MCF 10A (cell line): ENCODE measurements at regions of chr2 and their contacts with region 1.

Region 1: DNA sequence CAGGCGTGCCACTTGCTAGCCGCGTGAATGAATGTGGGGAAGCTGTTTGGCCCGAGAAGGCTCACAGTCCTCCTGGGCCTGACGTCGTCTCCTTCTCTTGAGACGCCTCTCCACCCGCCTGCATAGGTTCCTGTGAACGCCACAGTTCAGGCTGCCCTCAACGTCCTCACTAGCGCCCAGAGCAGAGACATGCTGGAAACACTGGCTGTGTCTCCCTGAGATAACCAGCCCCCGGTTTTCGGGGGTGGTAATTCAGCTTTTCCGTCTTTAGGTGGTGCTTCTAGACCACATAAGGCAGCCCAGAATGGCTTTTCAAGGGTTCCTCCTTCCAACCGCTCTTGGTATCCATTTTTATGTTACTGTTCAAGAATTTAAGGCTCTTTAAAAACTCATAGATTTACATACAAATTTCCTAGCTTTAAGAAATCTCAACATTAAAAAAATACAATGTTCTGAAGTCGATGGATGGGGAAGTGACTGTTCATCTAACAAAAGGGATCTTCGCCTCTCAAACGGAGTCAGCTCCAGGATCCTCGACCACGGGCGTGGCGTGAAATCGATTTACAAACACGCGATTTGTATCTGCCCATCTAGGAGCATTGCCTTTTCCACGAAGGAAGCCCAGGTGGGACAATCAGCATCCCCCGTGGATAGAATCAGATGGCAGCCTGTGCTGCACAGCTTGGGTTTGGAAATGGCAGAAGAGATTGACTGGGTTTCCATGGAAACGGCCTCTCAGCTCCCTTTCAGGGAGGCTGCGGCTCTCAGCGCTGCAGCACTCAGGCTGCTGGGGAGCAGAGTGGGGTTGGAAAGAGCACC is 110.6 kb upstream of the PXDN start:
- DNase-seq: peak; percentile 31
- H3K4me3 Mint-ChIP-seq: no peak overlapping the region
- H3K27ac Mint-ChIP-seq: no peak overlapping the region
- H3K4me1 Mint-ChIP-seq: no peaks in the 10 kb centered on the region
- H3K27me3 Mint-ChIP-seq: peaks cover 48% of the 10 kb centered on the region
- CTCF ChIP-seq: peak; percentile 35

Region 2: DNA sequence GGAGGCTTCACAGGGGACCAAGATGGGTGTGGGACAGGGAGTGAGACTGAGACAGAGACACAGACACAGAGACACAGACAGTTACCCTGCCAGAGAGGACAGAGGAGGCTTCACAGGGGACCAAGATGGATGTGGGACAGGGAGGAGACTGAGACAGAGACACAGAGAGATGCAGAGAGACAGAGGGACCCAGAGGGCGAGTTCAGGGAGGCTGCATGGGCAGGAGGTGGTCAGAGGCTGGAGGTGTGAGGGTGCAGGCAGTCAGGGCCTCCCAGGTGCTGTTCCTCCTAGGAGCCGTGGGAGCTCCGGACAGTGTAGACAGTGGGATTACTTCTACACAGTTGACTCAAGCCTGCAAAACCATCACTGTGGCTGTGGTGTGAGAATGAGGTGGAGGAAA is 95.5 kb after region 1 on chr2:
- CTCF ChIA-PET with region 1: no interaction called
- POLR2A ChIA-PET with region 1: no interaction called
- intact Hi-C with region 1: no loop called
- DNase-seq: no peak
- H3K4me3 Mint-ChIP-seq: no peak overlapping the region
- H3K27ac Mint-ChIP-seq: no peak overlapping the region
- H3K4me1 Mint-ChIP-seq: no peaks in the 10 kb centered on the region
- H3K27me3 Mint-ChIP-seq: peaks cover 34% of the 10 kb centered on the region
- CTCF ChIP-seq: no peak

Region 3: DNA sequence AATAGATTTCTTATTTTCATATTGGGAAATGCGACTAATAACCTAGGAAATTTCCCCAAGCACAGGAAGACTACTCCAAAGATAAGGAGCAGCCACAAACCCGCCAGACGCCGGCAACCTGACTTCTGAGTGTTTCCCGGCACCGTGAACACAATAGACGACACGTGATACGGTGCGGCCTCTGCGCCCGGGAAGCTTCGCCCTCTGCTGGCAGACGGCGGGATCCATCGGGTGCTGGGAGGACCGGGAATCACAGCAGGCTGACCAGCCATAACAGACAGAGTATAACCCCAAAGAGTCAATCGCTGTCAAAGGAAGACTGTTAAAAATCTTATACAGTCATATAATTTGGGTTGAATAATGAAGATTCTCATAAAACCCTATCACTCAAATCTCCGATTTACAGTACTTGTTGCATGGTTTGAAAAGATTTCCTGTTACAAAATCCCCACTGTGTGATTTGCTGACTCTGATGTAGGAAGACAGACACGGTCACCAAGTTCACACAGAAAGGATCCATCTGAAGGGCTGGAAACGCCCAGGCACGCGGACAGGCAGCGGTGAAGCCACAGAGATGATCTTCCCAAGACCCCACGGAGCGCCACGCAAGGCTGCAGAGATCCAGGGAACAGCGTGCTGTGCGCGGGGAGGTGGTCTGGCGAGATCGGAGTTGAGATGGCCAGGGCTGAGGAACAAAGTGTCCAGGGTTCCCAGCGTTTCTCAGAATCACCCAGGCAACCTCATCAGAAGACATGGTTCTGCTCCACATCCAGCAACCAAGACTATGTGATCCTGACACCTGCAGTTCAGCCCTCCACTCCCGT is 1448.9 kb after region 1 on chr2:
- CTCF ChIA-PET with region 1: no interaction called
- POLR2A ChIA-PET with region 1: no interaction called
- intact Hi-C with region 1: loop called (anchors 10 kb)
- DNase-seq: peak; percentile 77
- H3K4me3 Mint-ChIP-seq: no peak overlapping the region
- H3K27ac Mint-ChIP-seq: no peak overlapping the region
- H3K4me1 Mint-ChIP-seq: no peaks in the 10 kb centered on the region
- H3K27me3 Mint-ChIP-seq: no peaks in the 10 kb centered on the region
- CTCF ChIP-seq: peak; percentile 88

Region 4: GRCh38 chr2:3651691-3652648 is 1797.0 kb after region 1 on chr2:
- CTCF ChIA-PET with region 1: no interaction called
- POLR2A ChIA-PET with region 1: no interaction called
- intact Hi-C with region 1: loop called (anchors 5 kb)
- DNase-seq: no peak
- H3K4me3 Mint-ChIP-seq: no peak overlapping the region
- H3K27ac Mint-ChIP-seq: no peak overlapping the region
- H3K4me1 Mint-ChIP-seq: peaks cover 7% of the 10 kb centered on the region
- H3K27me3 Mint-ChIP-seq: no peaks in the 10 kb centered on the region
- CTCF ChIP-seq: no peak